K562 (cell line): ENCODE measurements at regions of chr4 and their contacts with region 1.

Region 1: DNA sequence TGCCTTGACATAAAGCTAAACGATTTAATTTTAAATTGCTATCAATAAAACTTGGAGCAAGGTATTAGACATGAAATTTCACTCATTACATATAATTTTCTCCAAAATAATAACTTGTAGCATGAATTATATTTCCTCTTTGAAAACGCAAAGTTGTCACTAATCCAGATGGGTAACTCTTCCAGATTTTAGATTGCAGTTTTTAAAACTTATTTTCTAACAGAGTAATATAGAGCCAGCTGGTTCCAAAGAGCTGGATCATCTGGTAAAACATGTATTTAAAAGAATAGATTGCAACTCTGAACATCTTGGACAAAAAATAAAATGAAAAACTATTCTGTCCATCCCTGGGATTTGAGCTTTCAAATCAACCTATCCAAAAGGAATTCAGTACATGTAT is 238.2 kb upstream of the INTU start:
- DNase-seq: no peak
- ATAC-seq: no peak
- H3K4me3 ChIP-seq: no peak overlapping the region
- H3K27ac ChIP-seq: no peak overlapping the region
- H3K4me1 ChIP-seq: no peaks in the 10 kb centered on the region
- H3K27me3 ChIP-seq: no peaks in the 10 kb centered on the region; a peak in 1 of 5 replicates
- CTCF ChIP-seq: no peak
- EP300 ChIP-seq: no peak
- POLR2A ChIP-seq: no peak
- RAD21 ChIP-seq: no peak

Region 2: GRCh38 chr4:127174616-127175015 is 219.9 kb before region 1 on chr4:
- CTCF ChIA-PET with region 1: no interaction called
- POLR2A ChIA-PET with region 1: no interaction called
- in situ Hi-C with region 1: no loop called
- intact Hi-C with region 1: loop called (anchors 10 kb)
- DNase-seq: no peak
- ATAC-seq: no peak
- H3K4me3 ChIP-seq: no peak overlapping the region
- H3K27ac ChIP-seq: no peak overlapping the region
- H3K4me1 ChIP-seq: no peaks in the 10 kb centered on the region
- H3K27me3 ChIP-seq: no peaks in the 10 kb centered on the region
- CTCF ChIP-seq: no peak
- EP300 ChIP-seq: no peak
- POLR2A ChIP-seq: no peak
- RAD21 ChIP-seq: no peak

Region 3: GRCh38 chr4:127309369-127310102 is 85.0 kb before region 1 on chr4:
- CTCF ChIA-PET with region 1: no interaction called
- POLR2A ChIA-PET with region 1: no interaction called
- in situ Hi-C with region 1: no loop called
- intact Hi-C with region 1: no loop called
- DNase-seq: no peak
- ATAC-seq: no peak
- H3K4me3 ChIP-seq: no peak overlapping the region
- H3K27ac ChIP-seq: no peak overlapping the region
- H3K4me1 ChIP-seq: no peaks in the 10 kb centered on the region
- H3K27me3 ChIP-seq: no peaks in the 10 kb centered on the region
- CTCF ChIP-seq: no peak
- EP300 ChIP-seq: no peak
- POLR2A ChIP-seq: no peak
- RAD21 ChIP-seq: no peak

Region 4: GRCh38 chr4:127479031-127479622 is 84.6 kb after region 1 on chr4:
- CTCF ChIA-PET with region 1: no interaction called
- POLR2A ChIA-PET with region 1: no interaction called
- in situ Hi-C with region 1: no loop called
- intact Hi-C with region 1: no loop called
- DNase-seq: peak; percentile 12 to 54 (median 18)
- ATAC-seq: 0 out of 3 replicates have a peak, but pooled peaks have one; percentile 47
- H3K4me3 ChIP-seq: no peak overlapping the region
- H3K27ac ChIP-seq: no peak overlapping the region
- H3K4me1 ChIP-seq: no peaks in the 10 kb centered on the region
- H3K27me3 ChIP-seq: no peaks in the 10 kb centered on the region
- CTCF ChIP-seq: peak; percentile 25 to 67 (median 39); a peak in 4 of 6 replicates
- EP300 ChIP-seq: no peak
- POLR2A ChIP-seq: no peak
- RAD21 ChIP-seq: peak; percentile 61 to 69

Region 5: GRCh38 chr4:127558489-127559407 is 164.2 kb after region 1 on chr4:
- CTCF ChIA-PET with region 1: no interaction called
- POLR2A ChIA-PET with region 1: no interaction called
- in situ Hi-C with region 1: no loop called
- intact Hi-C with region 1: no loop called
- DNase-seq: no peak
- ATAC-seq: no peak
- H3K4me3 ChIP-seq: no peak overlapping the region
- H3K27ac ChIP-seq: no peak overlapping the region
- H3K4me1 ChIP-seq: no peaks in the 10 kb centered on the region
- H3K27me3 ChIP-seq: no peaks in the 10 kb centered on the region; a peak in 1 of 5 replicates
- CTCF ChIP-seq: no peak
- EP300 ChIP-seq: no peak
- POLR2A ChIP-seq: no peak
- RAD21 ChIP-seq: no peak